Common myeloid progenitor, CD34-positive (primary cell): ENCODE measurements at regions of chr11 and their contacts with region 1.

Region 1: GRCh38 chr11:10307442-10308207 is 2.8 kb downstream of the ADM start:
- DNase-seq: peak; percentile 90 to 96 (median 96)
- H3K4me3 ChIP-seq: peak overlapping the region; percentile 15 to 95 (median 86)
- H3K27ac ChIP-seq: peak overlapping the region in 1 of 2 experiments; percentile 61
- H3K4me1 ChIP-seq: peaks cover 11 to 57% (median 53%) of the 10 kb centered on the region in 4 experiments
- H3K27me3 ChIP-seq: peaks cover 0 to 33% (median 18%) of the 10 kb centered on the region in 5 experiments

Region 2: GRCh38 chr11:9972989-9973388 is 334.6 kb before region 1 on chr11:
- CTCF ChIA-PET with region 1: interaction called, 17 read pairs
- POLR2A ChIA-PET with region 1: interaction called, 3 read pairs
- DNase-seq: peak; percentile 55 to 74 (median 73)
- H3K4me3 ChIP-seq: no peak overlapping the region
- H3K27ac ChIP-seq: no peak overlapping the region
- H3K4me1 ChIP-seq: peaks cover 0 to 10% (median 8%) of the 10 kb centered on the region in 4 experiments
- H3K27me3 ChIP-seq: no peaks in the 10 kb centered on the region

Region 3: DNA sequence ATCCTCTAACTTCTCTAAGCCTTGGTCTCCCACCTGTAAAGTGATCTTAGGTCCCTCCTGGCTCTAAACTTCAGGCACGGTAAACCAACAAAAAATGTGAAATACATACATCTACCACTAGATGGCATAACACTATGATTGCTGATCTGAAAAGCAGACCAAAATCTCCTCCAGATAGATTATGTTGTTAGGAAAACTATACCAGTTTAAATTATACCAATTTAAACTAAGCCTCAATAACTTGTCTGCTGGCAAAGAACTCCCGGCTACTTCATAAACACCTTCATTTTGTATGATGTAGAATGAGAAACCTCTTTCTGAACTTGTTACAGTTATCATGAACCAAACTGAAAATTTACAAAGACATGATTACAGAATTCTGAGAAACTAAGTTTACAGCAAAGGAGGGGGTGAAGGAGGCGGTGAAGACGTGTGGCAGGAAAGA is 99.5 kb before region 1 on chr11:
- CTCF ChIA-PET with region 1: interaction called, 41 read pairs
- POLR2A ChIA-PET with region 1: interaction called, 3 read pairs
- DNase-seq: peak; percentile 47 to 59 (median 51)
- H3K4me3 ChIP-seq: no peak overlapping the region
- H3K27ac ChIP-seq: no peak overlapping the region
- H3K4me1 ChIP-seq: peaks cover 0 to 4% (median 0%) of the 10 kb centered on the region in 4 experiments
- H3K27me3 ChIP-seq: no peaks in the 10 kb centered on the region

Region 4: DNA sequence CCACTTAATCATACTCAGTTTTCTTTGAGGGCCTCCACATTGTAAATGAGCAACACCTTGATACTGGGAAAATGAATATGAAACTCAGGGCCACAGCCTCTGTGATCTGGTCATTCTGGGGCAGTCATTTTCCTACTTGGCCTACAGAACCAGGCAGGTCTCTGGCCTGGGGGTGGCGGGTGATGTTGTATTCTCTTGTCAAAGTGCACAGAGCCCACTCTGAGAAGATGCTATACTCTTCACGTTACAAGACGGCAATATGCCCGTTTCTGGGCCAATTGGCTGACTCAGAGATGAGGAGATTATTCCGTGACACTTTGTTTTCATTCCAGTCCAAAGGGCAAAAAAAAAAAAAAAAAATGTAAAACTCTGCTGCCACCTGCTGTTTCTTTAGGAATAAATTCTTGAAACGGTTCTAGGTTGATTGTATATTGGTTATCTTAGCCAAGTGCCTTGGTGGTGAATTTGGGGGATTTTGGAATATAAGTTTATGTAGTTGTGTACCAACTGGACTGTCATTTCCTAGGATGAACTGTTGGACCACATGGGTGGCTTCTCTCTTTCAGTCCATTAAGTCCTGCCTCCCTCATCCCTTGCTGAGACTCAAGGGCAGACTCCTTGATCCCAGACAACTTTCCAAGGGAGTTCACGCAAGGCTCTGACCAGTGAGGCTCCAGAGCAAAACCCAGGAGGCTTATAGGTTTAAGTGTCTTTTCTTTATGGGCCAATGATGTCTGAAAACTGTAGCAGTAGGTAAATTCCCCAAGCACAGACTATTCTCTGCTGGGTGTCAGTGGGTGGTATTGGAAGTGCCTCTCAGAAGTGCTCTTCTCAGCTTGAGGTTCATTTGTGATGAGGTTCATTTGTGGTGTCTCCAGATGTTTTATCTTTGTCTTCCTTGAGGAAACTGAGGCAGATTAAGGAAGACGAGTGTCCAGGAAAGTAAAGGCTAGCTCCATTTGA is 15.5 kb after region 1 on chr11:
- CTCF ChIA-PET with region 1: interaction called, 48 read pairs
- POLR2A ChIA-PET with region 1: interaction called, 3 read pairs
- DNase-seq: peak; percentile 78 to 88 (median 87)
- H3K4me3 ChIP-seq: peak overlapping the region in 1 of 7 experiments; percentile 63
- H3K27ac ChIP-seq: no peak overlapping the region
- H3K4me1 ChIP-seq: peaks cover 0 to 16% (median 5%) of the 10 kb centered on the region in 4 experiments
- H3K27me3 ChIP-seq: no peaks in the 10 kb centered on the region